ENCODE measurements at regions of chr19 and their contacts with region 1.

Region 1: GRCh38 chr19:51570962-51571575 is at the start of gene ZNF175:
- DNase-seq: peak; percentile 71
- H3K4me3 Mint-ChIP-seq: peak within 1 kb of the TSS; percentile 97
- H3K27ac Mint-ChIP-seq: peak within 1 kb of the TSS; percentile 53
- H3K4me1 Mint-ChIP-seq: peaks cover 25% of the 10 kb centered on the region
- H3K27me3 Mint-ChIP-seq: peaks cover 13% of the 10 kb centered on the region
- total RNA-seq, gene ZNF175: 11.0 and 13.4 TPM in 2 replicates

Region 2: DNA sequence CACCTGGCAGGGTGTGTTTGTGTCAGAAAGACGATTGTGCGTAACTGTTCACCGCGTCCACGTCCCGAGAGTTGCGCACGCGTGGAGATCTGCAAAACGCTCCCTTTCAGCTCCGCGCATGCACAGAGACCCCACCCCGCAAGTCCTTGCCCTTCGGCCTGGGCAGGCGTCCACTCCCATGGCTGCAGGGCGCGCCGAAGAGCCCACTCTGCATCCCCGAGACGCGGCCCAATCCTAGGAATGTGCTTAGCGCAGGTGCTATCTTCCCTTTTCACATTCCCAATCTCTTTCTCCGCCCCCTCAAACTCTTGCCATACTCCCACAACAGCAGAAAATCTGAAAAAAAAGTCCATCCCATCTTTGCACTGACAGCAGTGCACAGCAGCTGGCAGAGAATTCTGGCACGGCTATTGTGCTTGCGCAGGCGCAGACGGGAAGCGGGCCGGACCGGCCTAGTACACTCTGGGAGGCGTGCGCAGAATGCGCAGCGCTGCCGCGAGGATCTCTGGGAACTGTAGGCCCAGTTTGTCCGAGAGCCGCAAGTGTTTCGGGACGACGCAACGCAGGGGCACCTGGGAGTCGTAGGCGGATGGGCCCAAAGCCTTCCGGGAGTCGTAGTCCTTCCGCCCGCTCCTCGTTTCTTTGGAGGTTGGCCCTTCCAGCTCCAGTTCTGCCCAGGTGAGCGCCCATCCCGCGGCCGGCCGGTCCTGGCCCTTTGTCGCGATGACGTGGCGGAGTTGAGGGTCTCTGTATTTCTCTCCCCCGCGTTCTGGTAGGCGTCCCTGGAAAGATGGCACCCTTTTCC is 23.1 kb after region 1 on chr19:
- intact Hi-C with region 1: loop called (anchors 1 kb)
- DNase-seq: peak; percentile 95
- H3K4me3 Mint-ChIP-seq: peak overlapping the region; percentile 89
- H3K27ac Mint-ChIP-seq: peak overlapping the region; percentile 80
- H3K4me1 Mint-ChIP-seq: peaks cover 20% of the 10 kb centered on the region
- H3K27me3 Mint-ChIP-seq: peaks cover 6% of the 10 kb centered on the region

Region 3: DNA sequence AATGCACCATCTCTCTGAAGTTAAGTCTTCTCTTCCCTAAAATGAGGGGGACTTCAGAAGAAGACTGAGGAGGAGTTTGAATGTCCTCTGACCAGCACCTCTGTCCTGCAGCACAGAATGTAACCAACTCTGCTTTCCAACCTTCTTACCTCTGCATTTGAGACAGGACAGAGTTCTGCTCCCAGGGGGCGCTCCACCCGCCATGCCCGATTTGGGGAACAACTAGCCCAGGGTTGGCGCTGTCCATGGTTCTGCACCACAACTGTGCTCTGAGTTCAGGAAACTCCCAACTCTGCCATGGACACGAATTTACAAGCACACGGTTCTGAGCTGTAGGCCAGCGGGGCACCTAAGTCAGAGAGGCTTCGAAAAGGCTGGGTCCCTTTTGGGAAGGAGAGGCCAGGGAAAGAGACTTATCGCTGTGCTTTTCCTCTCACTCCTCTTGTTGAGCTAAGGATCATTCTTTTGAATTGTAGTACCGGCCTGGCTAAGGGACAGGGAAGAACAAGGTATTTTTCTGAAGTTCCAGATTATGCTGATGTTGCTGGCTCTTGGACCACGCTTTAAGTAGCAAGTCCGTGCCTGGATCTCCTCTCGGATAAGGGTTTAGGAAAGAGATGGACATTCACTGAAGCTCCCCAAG is 37.0 kb after region 1 on chr19:
- intact Hi-C with region 1: loop called (anchors 5 kb)
- DNase-seq: peak; percentile 65
- H3K4me3 Mint-ChIP-seq: no peak overlapping the region
- H3K27ac Mint-ChIP-seq: no peak overlapping the region
- H3K4me1 Mint-ChIP-seq: peaks cover 20% of the 10 kb centered on the region
- H3K27me3 Mint-ChIP-seq: peaks cover 3% of the 10 kb centered on the region